ENCODE measurements at regions of chr20 and their contacts with region 1.

Region 1: GRCh38 chr20:50338479-50339391 is 148.1 kb downstream of the CEBPB start:
- DNase-seq: peak; percentile 76
- ATAC-seq: peak; percentile 76
- H3K4me3 Mint-ChIP-seq: peak overlapping the region; percentile 78
- H3K27ac Mint-ChIP-seq: peak overlapping the region; percentile 90
- H3K4me1 Mint-ChIP-seq: peaks cover 67% of the 10 kb centered on the region
- H3K27me3 Mint-ChIP-seq: peaks cover 9% of the 10 kb centered on the region

Region 2: GRCh38 chr20:50189681-50190582 is 148.8 kb before region 1 on chr20:
- POLR2A ChIA-PET with region 1: interaction called, 15 read pairs
- DNase-seq: peak; percentile 94
- ATAC-seq: peak; percentile 48
- H3K4me3 Mint-ChIP-seq: peak overlapping the region; percentile 35
- H3K27ac Mint-ChIP-seq: no peak overlapping the region
- H3K4me1 Mint-ChIP-seq: peaks cover 21% of the 10 kb centered on the region
- H3K27me3 Mint-ChIP-seq: peaks cover 6% of the 10 kb centered on the region

Region 3: DNA sequence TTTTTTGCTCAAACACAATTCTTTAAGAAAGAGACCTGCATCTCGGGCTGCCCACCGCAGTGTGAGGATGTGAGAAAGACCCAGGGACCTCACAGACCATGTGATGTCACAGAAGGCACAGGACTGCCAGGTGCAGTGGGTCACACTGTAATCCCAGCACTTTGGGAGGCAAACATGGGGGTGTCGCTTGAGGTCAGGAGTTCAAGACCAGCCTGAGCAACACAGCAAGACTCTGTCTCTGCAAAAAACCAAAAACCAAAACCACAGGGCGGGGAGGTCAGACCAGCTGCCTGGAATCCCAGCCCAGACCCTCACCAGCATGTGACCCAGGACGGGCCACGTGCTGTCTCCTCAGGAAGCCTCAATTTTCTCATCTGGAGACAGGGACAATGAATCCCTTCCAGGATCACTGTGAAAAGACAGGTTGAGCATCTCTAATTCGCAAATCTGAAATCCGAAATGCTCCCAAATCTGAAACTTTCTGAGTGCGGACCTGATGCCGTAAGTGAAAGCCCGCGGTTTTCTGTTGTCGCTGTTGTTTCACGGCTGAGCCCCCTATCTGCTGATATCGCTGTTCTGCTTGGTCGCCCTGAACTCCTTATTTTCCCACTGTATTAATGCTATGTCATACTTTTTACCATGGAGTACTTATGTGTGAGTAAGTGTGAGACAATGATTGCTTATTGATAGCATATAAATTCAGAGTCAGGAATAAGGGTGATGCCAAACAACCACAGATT is 11.9 kb after region 1 on chr20:
- POLR2A ChIA-PET with region 1: interaction called, 16 read pairs
- DNase-seq: no peak
- ATAC-seq: no peak
- H3K4me3 Mint-ChIP-seq: peak overlapping the region; percentile 28
- H3K27ac Mint-ChIP-seq: peak overlapping the region; percentile 33
- H3K4me1 Mint-ChIP-seq: peaks cover 50% of the 10 kb centered on the region
- H3K27me3 Mint-ChIP-seq: peaks cover 1% of the 10 kb centered on the region

Region 4: GRCh38 chr20:50385733-50386640 is 47.3 kb after region 1 on chr20:
- POLR2A ChIA-PET with region 1: interaction called, 11 read pairs
- DNase-seq: peak; percentile 80
- ATAC-seq: peak; percentile 89
- H3K4me3 Mint-ChIP-seq: peak overlapping the region; percentile 46
- H3K27ac Mint-ChIP-seq: peak overlapping the region; percentile 86
- H3K4me1 Mint-ChIP-seq: peaks cover 67% of the 10 kb centered on the region
- H3K27me3 Mint-ChIP-seq: no peaks in the 10 kb centered on the region